SK-N-SH (cell line): ENCODE measurements at regions of chr7 and their contacts with region 1.

Region 1: DNA sequence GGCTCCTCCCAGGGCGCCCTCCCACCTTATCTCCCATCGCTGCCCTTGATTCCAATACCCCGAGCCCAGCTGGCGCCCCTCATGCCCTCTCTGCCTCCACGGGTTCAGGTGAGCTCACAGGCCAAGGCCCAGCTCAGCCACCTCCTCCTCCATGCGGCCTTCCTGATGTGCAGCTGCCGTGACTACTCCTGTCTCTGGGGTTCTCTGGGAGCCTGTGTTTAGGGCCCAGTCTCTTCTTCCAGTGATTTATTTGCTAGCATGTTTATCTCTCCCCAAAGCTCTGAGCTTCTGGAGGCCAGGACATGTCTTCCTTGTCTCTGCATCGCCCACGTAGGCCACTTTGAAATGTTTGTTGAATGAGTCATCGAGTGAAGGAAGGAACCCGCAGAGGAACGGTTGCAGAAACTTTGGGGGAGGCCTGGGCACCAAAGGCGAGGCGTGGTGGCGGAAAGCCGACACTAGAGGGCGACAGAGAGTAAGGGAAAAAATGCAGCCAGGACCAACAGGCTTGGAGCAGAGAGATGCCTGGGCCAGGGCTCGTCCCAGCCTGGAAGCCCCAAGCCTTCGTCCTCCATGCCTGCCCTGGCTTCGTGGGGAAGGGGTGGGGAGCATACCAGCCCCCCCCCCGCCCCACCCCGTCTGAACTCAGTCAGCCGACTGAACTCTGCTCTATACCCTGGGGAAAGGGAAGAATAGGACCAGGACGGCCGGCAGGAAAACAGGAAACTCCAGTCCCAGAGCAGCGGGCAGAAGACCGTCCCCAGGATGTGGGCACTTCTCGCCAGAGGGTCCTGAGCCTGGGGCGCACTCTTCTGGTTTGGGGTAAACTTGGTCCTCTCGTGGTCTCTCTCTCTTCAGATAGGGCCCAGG is 10.9 kb upstream of the HSPB1 start:
- DNase-seq: peak; percentile 92
- H3K4me3 ChIP-seq: peak overlapping the region in 1 of 2 experiments; percentile 0; a peak in 1 of 4 replicates
- H3K27ac ChIP-seq: peak overlapping the region; percentile 67 to 91
- H3K4me1 ChIP-seq: peaks cover 26 to 36% of the 10 kb centered on the region in 2 experiments; a peak in 3 of 4 replicates
- H3K27me3 ChIP-seq: no peaks in the 10 kb centered on the region
- CTCF ChIP-seq: peak; percentile 99
- EP300 ChIP-seq: peak; percentile 18 to 56; a peak in 2 of 4 replicates
- RAD21 ChIP-seq: peak; percentile 98

Region 2: DNA sequence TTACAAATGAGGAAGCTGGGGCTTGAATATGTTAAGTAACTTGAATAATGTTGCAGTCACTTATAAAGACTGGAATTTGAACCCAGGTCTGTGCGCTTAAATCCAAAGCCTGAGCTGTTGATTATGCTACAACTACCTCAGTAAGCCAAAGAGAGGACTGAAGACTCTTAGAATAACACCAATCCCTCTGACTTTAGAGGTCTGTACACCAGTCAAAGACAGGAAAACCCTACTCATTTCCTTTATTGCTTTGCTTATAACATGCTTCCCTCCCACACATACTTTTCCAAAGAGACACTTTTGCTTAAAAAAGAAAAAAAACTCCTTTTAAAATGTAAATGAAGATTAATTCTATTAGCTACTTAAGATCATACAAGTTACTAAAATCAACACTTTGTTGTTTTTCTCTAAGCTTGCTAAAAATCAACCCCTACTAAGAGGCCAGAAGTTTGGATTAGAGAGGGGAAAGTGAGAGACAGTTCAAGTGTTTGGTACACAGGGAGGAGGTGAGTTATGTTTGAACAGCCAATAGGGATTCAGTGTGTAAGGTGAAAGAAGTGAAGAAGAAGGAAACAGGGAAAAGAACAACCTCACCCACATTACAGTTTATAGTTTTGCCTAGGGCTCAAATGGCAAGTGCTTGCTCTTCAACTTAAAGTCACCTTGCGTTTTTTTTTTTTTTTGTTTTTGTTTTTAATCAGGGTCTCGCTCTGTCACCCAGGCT is 168.9 kb before region 1 on chr7:
- CTCF ChIA-PET with region 1: no interaction called
- POLR2A ChIA-PET with region 1: no interaction called
- DNase-seq: no peak
- H3K4me3 ChIP-seq: no peak overlapping the region
- H3K27ac ChIP-seq: no peak overlapping the region
- H3K4me1 ChIP-seq: no peaks in the 10 kb centered on the region
- H3K27me3 ChIP-seq: no peaks in the 10 kb centered on the region
- CTCF ChIP-seq: no peak
- EP300 ChIP-seq: no peak
- RAD21 ChIP-seq: no peak

Region 3: DNA sequence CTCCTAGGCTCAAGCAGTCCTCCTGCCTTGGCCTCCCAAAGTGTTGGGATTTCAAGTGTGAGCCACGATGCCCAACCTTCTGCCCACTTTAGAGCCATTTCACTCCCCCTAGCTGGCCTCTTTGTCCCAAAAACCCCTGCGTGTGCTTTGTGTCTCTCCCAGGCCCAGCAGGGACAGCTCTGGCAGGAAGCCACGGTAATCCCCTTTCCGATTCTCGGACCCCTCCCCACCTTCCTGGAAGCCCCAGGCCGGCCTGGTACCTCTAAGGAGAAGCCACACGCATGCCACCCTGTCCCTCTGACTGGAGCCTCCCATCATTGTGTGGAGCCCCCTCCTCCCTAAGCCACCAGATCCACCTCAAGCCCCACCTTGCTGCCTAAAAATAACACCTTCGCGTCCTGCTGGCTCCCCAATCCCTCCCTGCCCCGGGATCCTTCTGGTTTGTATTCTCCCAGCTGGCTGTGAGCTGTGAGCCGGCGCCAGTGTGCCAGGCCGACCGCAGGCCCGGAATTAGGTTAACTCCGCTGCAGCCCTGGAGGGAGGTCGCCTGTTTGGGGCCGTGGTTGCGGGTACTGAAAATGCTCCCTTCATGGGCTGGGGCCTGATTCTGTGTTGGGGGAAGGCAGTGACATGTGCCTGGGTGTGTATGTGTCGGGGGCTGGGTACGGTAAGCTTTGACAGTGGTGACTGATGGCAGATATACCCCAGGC is 106.2 kb before region 1 on chr7:
- CTCF ChIA-PET with region 1: interaction called, 14 read pairs
- POLR2A ChIA-PET with region 1: no interaction called
- DNase-seq: peak; percentile 83
- H3K4me3 ChIP-seq: no peak overlapping the region
- H3K27ac ChIP-seq: peak overlapping the region in 1 of 2 experiments; percentile 86; a peak in 2 of 4 replicates
- H3K4me1 ChIP-seq: peaks cover 0 to 9% of the 10 kb centered on the region in 2 experiments; a peak in 1 of 4 replicates
- H3K27me3 ChIP-seq: no peaks in the 10 kb centered on the region
- CTCF ChIP-seq: no peak
- EP300 ChIP-seq: peak in 1 of 2 experiments; percentile 43; a peak in 1 of 4 replicates
- RAD21 ChIP-seq: peak; percentile 34

Region 4: DNA sequence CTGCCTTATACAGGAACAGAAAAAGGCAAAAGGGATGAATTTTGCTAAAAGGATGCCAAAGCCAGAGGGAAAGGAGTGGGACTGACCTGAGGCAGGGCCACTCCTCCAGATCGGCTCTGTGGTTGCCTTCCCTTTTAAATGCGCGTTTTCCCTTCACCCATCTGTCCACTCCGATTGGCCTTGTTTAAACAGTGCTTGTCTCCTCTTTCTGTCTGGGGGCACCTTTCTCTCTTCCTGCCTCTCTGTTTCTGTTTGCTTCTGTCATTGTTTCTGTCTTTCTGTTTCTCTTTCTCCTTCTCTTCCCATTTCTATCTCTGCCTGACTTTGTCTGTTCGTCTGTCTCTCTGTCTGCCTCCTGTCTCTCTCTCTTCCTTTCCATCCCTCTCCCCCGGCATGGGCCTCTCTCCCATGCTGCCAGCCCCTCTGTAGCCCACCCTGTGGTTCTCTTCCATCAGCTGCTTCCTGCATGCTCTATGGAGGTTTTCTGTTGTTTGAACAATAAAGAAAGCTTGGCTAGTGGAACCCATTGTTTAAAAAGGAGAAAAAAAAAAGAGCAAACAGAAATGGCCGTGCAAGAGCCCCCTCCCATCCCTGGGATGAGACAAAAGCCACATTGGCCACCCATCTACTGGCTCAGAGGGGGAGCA is 18.6 kb before region 1 on chr7:
- CTCF ChIA-PET with region 1: interaction called, 14 read pairs
- POLR2A ChIA-PET with region 1: no interaction called
- DNase-seq: no peak
- H3K4me3 ChIP-seq: no peak overlapping the region
- H3K27ac ChIP-seq: no peak overlapping the region
- H3K4me1 ChIP-seq: no peaks in the 10 kb centered on the region
- H3K27me3 ChIP-seq: no peaks in the 10 kb centered on the region
- CTCF ChIP-seq: no peak
- EP300 ChIP-seq: no peak
- RAD21 ChIP-seq: no peak

Region 5: DNA sequence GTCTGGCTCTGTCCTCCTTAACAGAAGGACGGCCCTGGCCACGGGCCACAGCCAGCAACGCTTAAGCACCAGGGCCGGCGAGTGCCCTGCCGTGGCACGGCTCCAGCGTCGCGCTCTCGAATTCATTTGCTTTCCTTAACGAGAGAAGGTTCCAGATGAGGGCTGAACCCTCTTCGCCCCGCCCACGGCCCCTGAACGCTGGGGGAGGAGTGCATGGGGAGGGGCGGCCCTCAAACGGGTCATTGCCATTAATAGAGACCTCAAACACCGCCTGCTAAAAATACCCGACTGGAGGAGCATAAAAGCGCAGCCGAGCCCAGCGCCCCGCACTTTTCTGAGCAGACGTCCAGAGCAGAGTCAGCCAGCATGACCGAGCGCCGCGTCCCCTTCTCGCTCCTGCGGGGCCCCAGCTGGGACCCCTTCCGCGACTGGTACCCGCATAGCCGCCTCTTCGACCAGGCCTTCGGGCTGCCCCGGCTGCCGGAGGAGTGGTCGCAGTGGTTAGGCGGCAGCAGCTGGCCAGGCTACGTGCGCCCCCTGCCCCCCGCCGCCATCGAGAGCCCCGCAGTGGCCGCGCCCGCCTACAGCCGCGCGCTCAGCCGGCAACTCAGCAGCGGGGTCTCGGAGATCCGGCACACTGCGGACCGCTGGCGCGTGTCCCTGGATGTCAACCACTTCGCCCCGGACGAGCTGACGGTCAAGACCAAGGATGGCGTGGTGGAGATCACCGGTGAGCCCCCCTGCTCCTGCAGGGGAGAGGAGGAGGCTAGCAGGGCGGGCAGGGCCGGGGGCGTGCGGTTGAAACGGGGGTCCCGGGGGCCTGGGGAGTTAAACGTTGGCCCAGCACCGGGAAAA is 11.0 kb after region 1 on chr7 and contains the start of gene HSPB1:
- CTCF ChIA-PET with region 1: interaction called, 774 read pairs
- POLR2A ChIA-PET with region 1: interaction called, 5 read pairs
- DNase-seq: peak; percentile 93
- H3K4me3 ChIP-seq: peak within 1 kb of the TSS; percentile 63 to 96
- H3K27ac ChIP-seq: peak within 1 kb of the TSS; percentile 71 to 86
- H3K4me1 ChIP-seq: peaks cover 18 to 21% of the 10 kb centered on the region in 2 experiments; a peak in 2 of 4 replicates
- H3K27me3 ChIP-seq: no peaks in the 10 kb centered on the region
- CTCF ChIP-seq: 0 out of 2 replicates have a peak, but pooled peaks have one; percentile 21
- EP300 ChIP-seq: peak; percentile 44 to 93; a peak in 3 of 4 replicates
- RAD21 ChIP-seq: peak; percentile 38; the same call in 1 of the 2 replicates
- polyA plus RNA-seq, gene HSPB1: 439 and 824 TPM in 2 replicates

Region 6: GRCh38 chr7:76327610-76328009 is 36.0 kb after region 1 on chr7:
- CTCF ChIA-PET with region 1: interaction called, 774 read pairs
- POLR2A ChIA-PET with region 1: no interaction called
- DNase-seq: peak; percentile 49
- H3K4me3 ChIP-seq: no peak overlapping the region
- H3K27ac ChIP-seq: peak overlapping the region in 1 of 2 experiments; percentile 18; a peak in 1 of 4 replicates
- H3K4me1 ChIP-seq: peaks cover 0 to 12% of the 10 kb centered on the region in 2 experiments; a peak in 2 of 4 replicates
- H3K27me3 ChIP-seq: no peaks in the 10 kb centered on the region
- CTCF ChIP-seq: no peak
- EP300 ChIP-seq: no peak
- RAD21 ChIP-seq: no peak

Region 7: DNA sequence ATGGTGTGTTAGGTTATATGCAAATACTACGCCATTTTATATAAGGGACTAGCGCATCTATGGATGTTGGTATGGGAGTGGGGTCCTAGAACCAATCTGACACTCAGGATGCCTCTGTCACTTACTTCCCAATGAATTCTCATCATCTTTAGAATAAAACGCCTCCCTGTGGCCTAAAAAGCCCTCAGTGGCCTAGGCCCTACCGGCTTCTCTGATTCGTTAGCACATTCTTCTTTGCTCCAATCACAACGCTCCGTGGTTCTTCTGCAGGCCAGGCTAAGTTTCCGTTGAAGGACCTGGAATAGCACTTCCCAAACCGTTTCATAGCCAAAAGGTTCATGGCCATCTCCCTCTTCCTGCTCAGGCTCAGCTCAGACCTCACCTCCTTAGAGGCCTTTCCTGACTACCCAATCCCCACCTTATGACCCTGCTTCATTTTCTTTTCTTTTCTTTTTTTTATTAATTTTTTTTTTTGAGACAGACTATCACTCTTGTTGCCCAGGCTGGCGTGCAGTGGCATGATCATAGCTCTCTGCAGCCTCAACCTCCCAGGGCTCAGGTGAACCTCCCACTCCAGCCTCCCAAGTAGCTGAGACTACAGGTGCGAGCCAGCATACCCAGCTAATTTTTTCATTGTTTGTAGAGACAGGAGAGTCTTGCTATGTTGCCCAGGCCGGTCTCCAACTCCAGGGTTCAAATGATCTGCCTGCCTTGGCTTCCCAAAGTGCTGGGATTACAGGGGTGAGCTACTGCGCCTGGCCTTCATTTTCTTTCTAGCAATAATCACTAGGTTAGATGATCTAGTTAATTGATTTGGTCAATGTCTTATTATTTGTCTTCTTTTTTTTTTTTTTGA is 91.7 kb after region 1 on chr7:
- CTCF ChIA-PET with region 1: no interaction called
- POLR2A ChIA-PET with region 1: no interaction called
- DNase-seq: peak; percentile 51
- H3K4me3 ChIP-seq: no peak overlapping the region
- H3K27ac ChIP-seq: no peak overlapping the region
- H3K4me1 ChIP-seq: peaks cover 6 to 17% of the 10 kb centered on the region in 2 experiments; a peak in 3 of 4 replicates
- H3K27me3 ChIP-seq: no peaks in the 10 kb centered on the region
- CTCF ChIP-seq: no peak
- EP300 ChIP-seq: no peak
- RAD21 ChIP-seq: no peak